ENCODE measurements at regions of chr10 and their contacts with region 1.

Region 1: GRCh38 chr10:62268399-62269114 is at the start of gene RTKN2:
- DNase-seq: no peak
- ATAC-seq: peak; percentile 85
- H3K4me3 ChIP-seq: peak within 1 kb of the TSS; percentile 74
- H3K27ac ChIP-seq: no peak within 1 kb of the TSS
- H3K4me1 ChIP-seq: no peaks in the 10 kb centered on the region
- H3K27me3 ChIP-seq: peaks cover 10 to 13% of the 10 kb centered on the region in 2 experiments
- CTCF ChIP-seq: no peak
- EP300 ChIP-seq: no peak
- POLR2A ChIP-seq: no peak; the same call in 1 of the 2 replicates
- RAD21 ChIP-seq: no peak
- polyA plus RNA-seq, gene RTKN2: not detected

Region 2: GRCh38 chr10:62166331-62167131 is 102.0 kb before region 1 on chr10:
- CTCF ChIA-PET with region 1: no interaction called
- POLR2A ChIA-PET with region 1: no interaction called
- RAD21 ChIA-PET with region 1: no interaction called
- SMC1A ChIA-PET with region 1: no interaction called
- in situ Hi-C with region 1: no loop called
- intact Hi-C with region 1: no loop called
- DNase-seq: peak; percentile 54
- ATAC-seq: peak; percentile 100
- H3K4me3 ChIP-seq: no peak overlapping the region
- H3K27ac ChIP-seq: peak overlapping the region; percentile 41
- H3K4me1 ChIP-seq: peaks cover 14% of the 10 kb centered on the region; the same call in 1 of the 2 replicates
- H3K27me3 ChIP-seq: no peaks in the 10 kb centered on the region
- CTCF ChIP-seq: no peak
- EP300 ChIP-seq: peak in 1 of 2 experiments; percentile 73; a peak in 2 of 4 replicates
- POLR2A ChIP-seq: no peak
- RAD21 ChIP-seq: no peak

Region 3: DNA sequence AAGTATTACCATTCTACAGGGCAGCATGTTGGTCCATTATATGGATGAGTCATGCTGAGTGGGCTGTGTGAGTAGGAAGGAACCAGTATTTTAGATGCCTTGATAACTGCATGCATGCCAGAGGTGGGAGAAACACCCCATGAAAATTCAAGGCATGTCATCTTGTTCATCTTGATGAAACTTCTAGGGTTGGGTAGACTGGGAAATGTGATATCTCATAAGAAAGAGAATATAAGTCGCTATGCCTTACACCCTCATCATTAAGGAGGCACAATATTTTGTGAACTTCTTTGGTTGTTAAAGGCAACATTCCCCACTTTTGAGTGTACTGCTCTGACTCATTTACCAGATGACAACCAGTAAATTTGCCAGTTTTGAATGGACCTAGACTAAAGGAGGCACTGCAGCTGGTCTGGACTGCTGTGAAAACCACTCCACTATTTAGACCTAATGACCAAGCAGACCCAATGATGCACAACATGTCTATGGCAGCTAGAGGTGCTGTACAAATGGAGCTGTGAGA is 153.6 kb after region 1 on chr10:
- CTCF ChIA-PET with region 1: interaction called, 3 read pairs
- POLR2A ChIA-PET with region 1: no interaction called
- RAD21 ChIA-PET with region 1: interaction called, 4 read pairs
- SMC1A ChIA-PET with region 1: no interaction called
- in situ Hi-C with region 1: no loop called
- intact Hi-C with region 1: loop called (anchors 5 kb)
- DNase-seq: no peak
- ATAC-seq: no peak
- H3K4me3 ChIP-seq: no peak overlapping the region
- H3K27ac ChIP-seq: no peak overlapping the region
- H3K4me1 ChIP-seq: no peaks in the 10 kb centered on the region
- H3K27me3 ChIP-seq: no peaks in the 10 kb centered on the region
- CTCF ChIP-seq: no peak
- EP300 ChIP-seq: no peak
- POLR2A ChIP-seq: no peak
- RAD21 ChIP-seq: no peak

Region 4: GRCh38 chr10:62443866-62444265 is 175.3 kb after region 1 on chr10:
- CTCF ChIA-PET with region 1: no interaction called
- POLR2A ChIA-PET with region 1: no interaction called
- RAD21 ChIA-PET with region 1: no interaction called
- SMC1A ChIA-PET with region 1: no interaction called
- in situ Hi-C with region 1: no loop called
- intact Hi-C with region 1: no loop called
- DNase-seq: no peak
- ATAC-seq: no peak
- H3K4me3 ChIP-seq: no peak overlapping the region
- H3K27ac ChIP-seq: no peak overlapping the region
- H3K4me1 ChIP-seq: no peaks in the 10 kb centered on the region
- H3K27me3 ChIP-seq: peaks cover 0 to 7% of the 10 kb centered on the region in 2 experiments; a peak in 2 of 4 replicates
- CTCF ChIP-seq: no peak
- EP300 ChIP-seq: no peak
- POLR2A ChIP-seq: no peak
- RAD21 ChIP-seq: no peak

Region 5: GRCh38 chr10:62742536-62743061 is 474.0 kb after region 1 on chr10:
- CTCF ChIA-PET with region 1: no interaction called
- POLR2A ChIA-PET with region 1: no interaction called
- RAD21 ChIA-PET with region 1: no interaction called
- SMC1A ChIA-PET with region 1: no interaction called
- in situ Hi-C with region 1: no loop called
- intact Hi-C with region 1: no loop called
- DNase-seq: no peak
- ATAC-seq: peak; percentile 72
- H3K4me3 ChIP-seq: no peak overlapping the region
- H3K27ac ChIP-seq: peak overlapping the region; percentile 29; the same call in 1 of the 2 replicates
- H3K4me1 ChIP-seq: peaks cover 12% of the 10 kb centered on the region
- H3K27me3 ChIP-seq: no peaks in the 10 kb centered on the region
- CTCF ChIP-seq: no peak
- EP300 ChIP-seq: 0 out of 4 replicates have a peak, but pooled peaks of 1 of the 2 experiments have one; percentile 24
- POLR2A ChIP-seq: no peak
- RAD21 ChIP-seq: no peak

Measured in GM12878 (cell line).